Adrenal gland (tissue), 19 donors: ENCODE measurements at regions of chr7 and their contacts with region 1.

Region 1: DNA sequence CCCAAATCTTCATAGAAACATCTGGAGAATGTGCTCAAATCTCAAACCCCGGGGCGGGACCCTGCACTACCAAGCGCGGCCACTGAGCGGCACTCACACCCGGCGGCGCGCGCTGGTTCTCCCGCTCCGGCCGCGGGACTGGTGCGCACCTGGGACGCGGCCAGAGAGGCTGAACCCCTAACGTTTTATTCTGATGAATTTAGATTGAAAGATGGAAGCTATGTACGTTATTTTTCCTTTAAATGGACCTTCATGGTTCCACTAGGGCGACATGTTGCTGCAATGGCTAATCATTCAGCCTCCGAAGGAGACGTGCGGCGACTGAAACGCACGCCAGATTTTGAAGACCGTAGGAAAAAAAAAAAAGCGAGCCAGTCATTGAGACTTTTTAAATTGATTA is 107.0 kb upstream of the INSIG1 start:
- DNase-seq: peak in 5 of 7 donors; percentile 33 to 62 (median 53)
- H3K4me3 ChIP-seq: no peak overlapping the region
- H3K27ac ChIP-seq: no peak overlapping the region
- H3K4me1 ChIP-seq: no peaks in the 10 kb centered on the region
- H3K27me3 ChIP-seq: peaks cover 4% of the 10 kb centered on the region
- CTCF ChIP-seq: peak; percentile 77 to 94 (median 84)
- POLR2A ChIP-seq: no peak

Region 2: GRCh38 chr7:154913638-154914312 is 276.9 kb before region 1 on chr7:
- intact Hi-C with region 1: loop called in 1 of 2 experiments (anchors 10 kb)
- DNase-seq: peak; percentile 78 to 94 (median 88)
- H3K4me3 ChIP-seq: no peak overlapping the region
- H3K27ac ChIP-seq: no peak overlapping the region
- H3K4me1 ChIP-seq: peaks cover 0 to 7% of the 10 kb centered on the region in 2 donors
- H3K27me3 ChIP-seq: peaks cover 12% of the 10 kb centered on the region
- CTCF ChIP-seq: peak; percentile 57 to 93 (median 75)
- POLR2A ChIP-seq: no peak

Region 3: GRCh38 chr7:155298834-155299534 is 108.3 kb after region 1 on chr7:
- intact Hi-C with region 1: no loop called
- DNase-seq: peak; percentile 95 to 99 (median 98)
- H3K4me3 ChIP-seq: peak overlapping the region in 3 of 4 donors; percentile 55 to 89 (median 56)
- H3K27ac ChIP-seq: peak overlapping the region; percentile 87 to 98 (median 92)
- H3K4me1 ChIP-seq: peaks cover 25 to 38% of the 10 kb centered on the region in 2 donors
- H3K27me3 ChIP-seq: no peaks in the 10 kb centered on the region
- CTCF ChIP-seq: peak in 1 of 6 experiments; percentile 15
- POLR2A ChIP-seq: peak; percentile 34 to 84

Region 4: GRCh38 chr7:155412537-155413253 is 222.0 kb after region 1 on chr7:
- intact Hi-C with region 1: no loop called
- DNase-seq: peak; percentile 37 to 69 (median 55)
- H3K4me3 ChIP-seq: no peak overlapping the region
- H3K27ac ChIP-seq: no peak overlapping the region
- H3K4me1 ChIP-seq: no peaks in the 10 kb centered on the region
- H3K27me3 ChIP-seq: peaks cover 5% of the 10 kb centered on the region
- CTCF ChIP-seq: peak in 5 of 6 experiments; percentile 44 to 58 (median 53)
- POLR2A ChIP-seq: no peak